ENCODE measurements at regions of chr2 and their contacts with region 1.

Region 1: DNA sequence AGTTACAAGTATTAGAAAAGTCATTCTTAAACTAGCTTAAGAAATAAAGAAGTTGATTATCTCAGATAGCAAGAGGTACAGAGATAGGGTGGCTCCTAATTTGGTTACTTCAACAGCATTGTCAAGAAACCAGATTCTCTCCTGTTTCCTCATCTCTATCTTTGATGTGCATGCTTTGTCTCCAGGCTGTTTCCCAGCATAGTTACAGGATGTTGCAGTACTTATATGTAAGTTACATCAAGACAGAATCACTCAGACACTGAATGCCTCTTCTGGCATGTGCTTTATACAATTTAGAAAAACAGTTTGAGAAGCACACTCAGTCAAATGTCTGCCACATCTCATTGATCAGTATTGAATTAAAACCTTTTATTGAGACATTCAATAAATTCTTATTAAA is 189.5 kb upstream of the UBE2E3 start:
- DNase-seq: no peak
- H3K4me3 ChIP-seq: no peak overlapping the region
- H3K27ac ChIP-seq: no peak overlapping the region
- H3K4me1 ChIP-seq: no peaks in the 10 kb centered on the region
- H3K27me3 ChIP-seq: no peaks in the 10 kb centered on the region
- CTCF ChIP-seq: no peak

Region 2: GRCh38 chr2:180604077-180604476 is 186.8 kb before region 1 on chr2:
- CTCF ChIA-PET with region 1: no interaction called
- dilution Hi-C with region 1: no loop called
- in situ Hi-C with region 1: no loop called
- intact Hi-C with region 1: loop called (anchors 10 kb)
- DNase-seq: peak; percentile 8
- H3K4me3 ChIP-seq: no peak overlapping the region
- H3K27ac ChIP-seq: no peak overlapping the region
- H3K4me1 ChIP-seq: no peaks in the 10 kb centered on the region
- H3K27me3 ChIP-seq: no peaks in the 10 kb centered on the region
- CTCF ChIP-seq: peak; percentile 56 to 57

Region 3: DNA sequence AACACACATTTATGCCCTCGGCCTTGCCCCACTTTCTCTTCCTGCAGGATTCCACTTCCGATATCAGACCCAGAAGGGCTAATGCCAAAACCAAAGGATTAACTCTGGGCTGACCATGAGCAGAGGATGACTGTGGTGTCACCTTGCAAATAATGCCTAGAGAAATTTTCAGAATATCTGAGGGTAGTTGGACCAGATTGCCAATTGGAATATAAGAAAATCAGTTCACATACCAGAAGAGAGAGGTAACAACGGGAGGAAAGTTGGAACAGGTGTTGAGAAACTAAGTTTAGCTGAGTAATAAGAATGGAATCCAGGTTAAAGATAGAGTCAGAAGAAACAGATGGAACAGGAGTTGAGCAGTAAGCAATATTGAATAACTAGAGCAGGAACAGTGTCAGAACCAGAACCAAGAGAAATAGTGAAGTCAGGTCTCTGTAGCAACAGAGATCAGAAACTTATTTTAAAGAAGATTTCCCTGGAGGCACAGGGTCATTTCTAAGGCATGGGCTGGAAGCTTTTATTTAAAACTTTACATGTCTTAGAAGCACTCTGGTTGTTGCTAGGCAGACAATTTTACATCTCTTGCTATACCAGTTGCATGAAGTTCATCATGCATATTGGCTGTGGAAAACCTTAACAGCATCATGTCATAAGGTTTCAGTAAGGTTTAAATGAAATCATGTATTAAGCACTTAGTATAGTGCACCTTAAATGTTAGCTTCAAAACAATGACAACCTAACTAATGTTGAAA is 43.0 kb before region 1 on chr2:
- CTCF ChIA-PET with region 1: no interaction called
- dilution Hi-C with region 1: no loop called
- in situ Hi-C with region 1: no loop called
- intact Hi-C with region 1: loop called (anchors 5 kb)
- DNase-seq: peak; percentile 69
- H3K4me3 ChIP-seq: no peak overlapping the region
- H3K27ac ChIP-seq: no peak overlapping the region
- H3K4me1 ChIP-seq: peaks cover 19% of the 10 kb centered on the region
- H3K27me3 ChIP-seq: no peaks in the 10 kb centered on the region
- CTCF ChIP-seq: no peak

Measured in mammary epithelial cell (primary cell).